Caco-2 (cell line): ENCODE measurements at regions of chr9 and their contacts with region 1.

Region 1: GRCh38 chr9:109721001-109721400 is 59.0 kb upstream of the PALM2AKAP2 start:
- DNase-seq: no peak
- H3K4me3 ChIP-seq: no peak overlapping the region
- H3K4me3 Mint-ChIP-seq: no peak overlapping the region
- H3K27ac Mint-ChIP-seq: no peak overlapping the region
- H3K4me1 ChIP-seq: no peaks in the 10 kb centered on the region
- H3K4me1 Mint-ChIP-seq: no peaks in the 10 kb centered on the region
- H3K27me3 ChIP-seq: no peaks in the 10 kb centered on the region
- H3K27me3 Mint-ChIP-seq: peaks cover 7% of the 10 kb centered on the region
- CTCF ChIP-seq: no peak

Region 2: DNA sequence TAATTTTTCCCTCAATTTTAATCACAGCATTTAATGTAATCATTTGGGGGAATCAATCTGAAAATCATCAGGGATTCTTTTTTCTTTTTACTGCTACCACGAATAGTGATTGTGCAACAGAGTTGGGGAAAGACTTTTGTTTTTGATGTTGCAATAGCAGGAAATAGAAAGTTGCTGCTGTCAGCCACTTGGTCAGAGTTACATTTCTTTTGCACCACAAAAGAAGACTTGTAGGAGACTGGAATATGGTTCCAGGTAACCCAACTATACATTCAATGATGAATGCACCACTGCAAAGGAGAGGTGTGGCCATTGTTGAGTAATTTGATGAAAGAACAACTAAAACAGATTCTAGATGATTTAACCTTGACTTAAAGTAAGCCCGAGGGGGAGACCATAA is 12.7 kb after region 1 on chr9:
- CTCF ChIA-PET with region 1: no interaction called
- POLR2A ChIA-PET with region 1: interaction called, 11 read pairs
- intact Hi-C with region 1: no loop called
- DNase-seq: no peak
- H3K4me3 ChIP-seq: no peak overlapping the region
- H3K4me3 Mint-ChIP-seq: no peak overlapping the region
- H3K27ac Mint-ChIP-seq: no peak overlapping the region
- H3K4me1 ChIP-seq: no peaks in the 10 kb centered on the region
- H3K4me1 Mint-ChIP-seq: no peaks in the 10 kb centered on the region
- H3K27me3 ChIP-seq: no peaks in the 10 kb centered on the region
- H3K27me3 Mint-ChIP-seq: peaks cover 16% of the 10 kb centered on the region
- CTCF ChIP-seq: no peak

Region 3: DNA sequence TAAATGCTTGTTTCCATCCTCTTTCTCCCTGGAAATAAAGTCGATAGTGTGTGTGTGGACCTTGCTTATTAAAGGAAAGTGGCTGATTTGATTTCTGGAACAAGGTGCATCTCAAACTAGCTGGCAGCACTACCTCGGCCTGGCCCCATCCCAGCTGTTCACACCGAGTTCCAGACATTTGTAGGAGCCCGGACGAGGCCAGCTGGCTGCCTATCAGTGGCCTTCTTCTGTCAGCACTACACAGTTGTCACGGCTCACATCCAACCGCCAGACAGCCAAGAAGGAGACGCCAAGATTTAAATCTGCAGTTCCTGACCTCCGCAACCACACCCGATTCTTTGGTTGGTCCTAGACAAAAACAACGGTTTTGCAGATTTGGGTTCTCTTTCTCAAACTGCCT is 122.6 kb after region 1 on chr9:
- CTCF ChIA-PET with region 1: no interaction called
- POLR2A ChIA-PET with region 1: no interaction called
- intact Hi-C with region 1: no loop called
- DNase-seq: no peak
- H3K4me3 ChIP-seq: no peak overlapping the region
- H3K4me3 Mint-ChIP-seq: no peak overlapping the region
- H3K27ac Mint-ChIP-seq: no peak overlapping the region
- H3K4me1 ChIP-seq: no peaks in the 10 kb centered on the region
- H3K4me1 Mint-ChIP-seq: no peaks in the 10 kb centered on the region
- H3K27me3 ChIP-seq: no peaks in the 10 kb centered on the region; the same call in 1 of the 2 replicates
- H3K27me3 Mint-ChIP-seq: peaks cover 17% of the 10 kb centered on the region
- CTCF ChIP-seq: no peak